HepG2 (cell line): ENCODE measurements at regions of chr20 and their contacts with region 1.

Region 1: GRCh38 chr20:49534255-49534712 is 33.7 kb downstream of the PTGIS start:
- DNase-seq: peak; percentile 63
- ATAC-seq: peak; percentile 87
- H3K4me3 ChIP-seq: no peak overlapping the region
- H3K27ac ChIP-seq: no peak overlapping the region
- H3K4me1 ChIP-seq: no peaks in the 10 kb centered on the region
- H3K27me3 ChIP-seq: peaks cover 0 to 1% of the 10 kb centered on the region in 2 experiments; a peak in 1 of 5 replicates
- CTCF ChIP-seq: peak; percentile 91
- EP300 ChIP-seq: no peak
- POLR2A ChIP-seq: no peak
- RAD21 ChIP-seq: peak; percentile 65

Region 2: DNA sequence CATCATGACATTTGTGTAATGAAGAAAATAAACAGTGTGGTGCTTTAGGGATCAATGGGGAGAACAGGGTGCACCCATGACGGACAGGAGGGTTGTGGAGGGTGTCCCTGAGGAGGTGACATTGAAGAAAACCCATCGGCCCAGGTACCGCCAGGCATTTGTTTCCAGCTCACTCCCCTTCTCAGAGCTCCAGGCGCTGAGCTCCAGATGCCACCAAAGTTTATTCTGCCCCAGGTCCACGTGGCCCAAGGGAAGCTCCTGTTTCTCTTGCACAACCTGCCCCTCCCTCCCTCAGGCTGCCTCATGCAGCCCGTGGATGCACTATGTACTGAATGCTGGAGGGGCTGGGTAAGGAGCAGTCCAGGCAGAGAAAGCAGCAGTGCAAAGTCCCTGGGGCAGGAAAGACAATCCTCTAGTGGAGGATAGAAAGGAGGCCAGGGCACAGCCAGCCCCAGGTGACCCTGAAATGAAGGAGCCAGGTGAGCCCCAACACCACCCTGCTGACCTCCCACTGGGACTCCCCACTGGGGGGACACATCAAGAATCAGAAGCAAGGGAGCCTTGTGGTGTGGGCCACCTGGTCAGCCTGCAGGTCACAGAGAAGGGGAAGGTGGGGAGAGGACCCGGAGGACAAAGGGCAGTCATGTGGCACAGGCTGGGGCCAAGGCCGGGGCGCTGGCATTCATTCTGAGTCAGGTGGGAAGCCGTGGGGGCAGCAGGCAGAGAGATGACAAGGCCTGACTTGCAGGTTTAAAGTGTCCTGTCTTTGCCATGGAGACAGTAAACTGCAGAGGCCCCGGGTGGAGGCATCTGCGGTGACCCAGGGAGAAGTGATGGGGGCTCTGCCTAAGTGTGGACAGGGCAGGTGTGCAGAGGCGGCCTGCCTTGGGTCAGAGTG is 936.6 kb before region 1 on chr20:
- CTCF ChIA-PET with region 1: no interaction called
- POLR2A ChIA-PET with region 1: no interaction called
- in situ Hi-C with region 1: no loop called
- intact Hi-C with region 1: no loop called
- DNase-seq: peak; percentile 76
- ATAC-seq: peak; percentile 94
- H3K4me3 ChIP-seq: no peak overlapping the region
- H3K27ac ChIP-seq: no peak overlapping the region
- H3K4me1 ChIP-seq: peaks cover 16% of the 10 kb centered on the region
- H3K27me3 ChIP-seq: 0 out of 5 replicates have a peak, but pooled peaks cover 0 to under 1% of the 10 kb centered on the region in 2 experiments
- CTCF ChIP-seq: no peak
- EP300 ChIP-seq: peak in 1 of 2 experiments; percentile 57; a peak in 2 of 4 replicates
- POLR2A ChIP-seq: no peak
- RAD21 ChIP-seq: 0 out of 2 replicates have a peak, but pooled peaks have one; percentile 22

Region 3: GRCh38 chr20:49338061-49338460 is 196.2 kb before region 1 on chr20:
- CTCF ChIA-PET with region 1: interaction called, 198 read pairs
- POLR2A ChIA-PET with region 1: no interaction called
- in situ Hi-C with region 1: no loop called
- intact Hi-C with region 1: loop called (anchors 1 kb)
- DNase-seq: no peak
- ATAC-seq: no peak
- H3K4me3 ChIP-seq: no peak overlapping the region
- H3K27ac ChIP-seq: no peak overlapping the region
- H3K4me1 ChIP-seq: no peaks in the 10 kb centered on the region
- H3K27me3 ChIP-seq: peaks cover 1 to 25% of the 10 kb centered on the region in 2 experiments; a peak in 3 of 5 replicates
- CTCF ChIP-seq: no peak
- EP300 ChIP-seq: no peak
- POLR2A ChIP-seq: no peak
- RAD21 ChIP-seq: no peak

Region 4: DNA sequence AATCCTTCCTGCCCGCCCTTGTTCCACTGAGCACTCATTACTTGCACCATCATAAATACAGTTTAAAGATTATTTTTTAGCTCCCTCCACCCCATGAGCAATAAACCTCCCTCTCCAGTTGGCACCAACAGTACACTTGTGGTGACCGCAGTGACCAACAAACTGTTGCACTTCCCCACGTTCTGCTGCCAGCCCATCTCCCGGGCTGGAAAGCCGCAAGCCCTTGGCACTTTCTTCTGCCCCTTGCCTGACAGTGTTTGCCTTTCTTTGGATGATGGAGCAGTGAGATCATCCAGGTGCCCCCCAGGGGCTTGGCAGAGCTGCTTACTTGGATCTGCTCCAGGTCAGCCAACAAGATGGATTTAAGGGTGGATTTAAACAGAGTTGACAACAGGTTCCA is 73.4 kb before region 1 on chr20:
- CTCF ChIA-PET with region 1: no interaction called
- POLR2A ChIA-PET with region 1: no interaction called
- in situ Hi-C with region 1: no loop called
- intact Hi-C with region 1: no loop called
- DNase-seq: no peak
- ATAC-seq: no peak
- H3K4me3 ChIP-seq: no peak overlapping the region
- H3K27ac ChIP-seq: no peak overlapping the region
- H3K4me1 ChIP-seq: no peaks in the 10 kb centered on the region
- H3K27me3 ChIP-seq: peaks cover 10 to 62% of the 10 kb centered on the region in 2 experiments; a peak in 3 of 5 replicates
- CTCF ChIP-seq: no peak
- EP300 ChIP-seq: no peak
- POLR2A ChIP-seq: no peak
- RAD21 ChIP-seq: no peak

Region 5: GRCh38 chr20:49508435-49509199 is 25.7 kb before region 1 on chr20:
- CTCF ChIA-PET with region 1: interaction called, 3 read pairs
- POLR2A ChIA-PET with region 1: no interaction called
- in situ Hi-C with region 1: no loop called
- intact Hi-C with region 1: loop called (anchors 1 kb)
- DNase-seq: peak; percentile 56
- ATAC-seq: peak; percentile 60
- H3K4me3 ChIP-seq: no peak overlapping the region
- H3K27ac ChIP-seq: no peak overlapping the region
- H3K4me1 ChIP-seq: no peaks in the 10 kb centered on the region
- H3K27me3 ChIP-seq: peaks cover 1 to 40% of the 10 kb centered on the region in 2 experiments; a peak in 3 of 5 replicates
- CTCF ChIP-seq: peak; percentile 84
- EP300 ChIP-seq: no peak
- POLR2A ChIP-seq: no peak
- RAD21 ChIP-seq: peak; percentile 62

Region 6: GRCh38 chr20:49568471-49569161 is 34.3 kb after region 1 on chr20:
- CTCF ChIA-PET with region 1: no interaction called
- POLR2A ChIA-PET with region 1: no interaction called
- in situ Hi-C with region 1: no loop called
- intact Hi-C with region 1: loop called (anchors 1 kb)
- DNase-seq: no peak
- ATAC-seq: no peak
- H3K4me3 ChIP-seq: no peak overlapping the region
- H3K27ac ChIP-seq: no peak overlapping the region
- H3K4me1 ChIP-seq: peaks cover 19% of the 10 kb centered on the region; the same call in 1 of the 2 replicates
- H3K27me3 ChIP-seq: peaks cover 3 to 53% of the 10 kb centered on the region in 2 experiments; a peak in 4 of 5 replicates
- CTCF ChIP-seq: no peak
- EP300 ChIP-seq: no peak
- POLR2A ChIP-seq: no peak
- RAD21 ChIP-seq: no peak